ENCODE measurements at regions of chr9 and their contacts with region 1.

Region 1: DNA sequence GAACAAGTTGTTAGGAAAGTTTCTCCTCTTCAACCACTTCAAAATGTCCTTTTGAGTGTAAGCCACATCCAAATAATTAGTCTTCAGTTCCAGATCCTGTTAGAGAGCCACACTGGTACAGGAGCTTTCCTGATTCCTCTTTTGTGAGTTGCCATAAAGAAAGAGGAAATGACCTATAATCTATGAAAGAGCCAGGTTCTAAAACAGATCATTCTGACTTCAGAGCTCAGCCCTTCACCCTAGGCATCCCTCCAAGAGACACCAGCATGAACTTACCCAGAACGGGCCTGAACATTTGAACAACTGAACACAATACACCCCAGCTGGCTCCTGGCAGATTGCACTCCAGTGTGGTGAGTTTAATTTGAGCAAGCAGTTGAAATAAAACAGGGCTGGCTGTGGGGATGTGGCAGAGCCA is 25.7 kb downstream of the SLC1A1 start:
- DNase-seq: no peak
- H3K4me3 ChIP-seq: no peak overlapping the region
- H3K27ac ChIP-seq: no peak overlapping the region
- H3K4me1 ChIP-seq: 0 out of 2 replicates have a peak, but pooled peaks cover 6% of the 10 kb centered on the region
- H3K27me3 ChIP-seq: no peaks in the 10 kb centered on the region
- CTCF ChIP-seq: no peak

Region 2: GRCh38 chr9:4740638-4741364 is 224.8 kb after region 1 on chr9 and contains the start of gene AK3:
- CTCF ChIA-PET with region 1: interaction called, 14 read pairs
- POLR2A ChIA-PET with region 1: no interaction called
- intact Hi-C with region 1: no loop called
- DNase-seq: peak; percentile 63 to 84
- H3K4me3 ChIP-seq: peak within 1 kb of the TSS; percentile 73
- H3K27ac ChIP-seq: peak within 1 kb of the TSS; percentile 49
- H3K4me1 ChIP-seq: peaks cover 16% of the 10 kb centered on the region
- H3K27me3 ChIP-seq: no peaks in the 10 kb centered on the region
- CTCF ChIP-seq: no peak
- total RNA-seq, gene AK3: 34.0 and 36.2 TPM in 2 replicates